ENCODE measurements at regions of chr18 and their contacts with region 1.

Region 1: DNA sequence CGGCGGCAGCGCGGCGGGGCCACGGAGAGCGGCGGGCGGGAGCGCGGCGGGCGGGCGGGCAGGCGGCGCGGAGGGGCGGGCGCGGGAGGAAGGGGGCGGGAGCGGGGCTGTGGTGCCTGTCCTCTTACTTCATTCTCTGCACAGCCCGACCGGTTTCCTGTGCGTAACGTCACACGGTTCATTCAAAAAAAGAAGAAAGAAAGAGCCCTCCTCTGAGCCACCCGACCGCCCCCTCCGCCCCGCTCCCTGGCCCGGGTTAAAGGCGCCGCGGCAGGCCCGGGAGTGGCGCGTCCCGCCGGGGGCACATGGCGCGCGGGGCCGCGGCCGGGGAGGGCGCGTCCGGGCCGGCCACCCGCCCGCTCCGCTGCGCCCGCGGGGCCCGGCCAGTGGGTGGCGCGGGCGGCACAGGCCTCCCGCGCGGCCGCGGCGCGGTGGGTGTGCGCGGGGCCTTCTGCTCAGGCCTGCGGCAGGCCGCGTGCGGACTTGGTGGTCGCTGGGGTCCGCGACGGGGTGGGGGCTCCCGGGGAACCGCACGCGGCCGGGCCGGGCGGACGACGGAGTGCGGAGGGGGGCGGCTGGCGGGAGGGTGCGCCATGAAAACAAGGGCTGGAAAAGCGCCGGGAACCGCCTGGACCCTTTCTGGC is 599 bp upstream of the BCL2 start:
- DNase-seq: peak; percentile 92

Region 2: GRCh38 chr18:63016270-63016669 is 303.9 kb before region 1 on chr18:
- intact Hi-C with region 1: loop called (anchors 1 kb)
- DNase-seq: no peak

Region 3: DNA sequence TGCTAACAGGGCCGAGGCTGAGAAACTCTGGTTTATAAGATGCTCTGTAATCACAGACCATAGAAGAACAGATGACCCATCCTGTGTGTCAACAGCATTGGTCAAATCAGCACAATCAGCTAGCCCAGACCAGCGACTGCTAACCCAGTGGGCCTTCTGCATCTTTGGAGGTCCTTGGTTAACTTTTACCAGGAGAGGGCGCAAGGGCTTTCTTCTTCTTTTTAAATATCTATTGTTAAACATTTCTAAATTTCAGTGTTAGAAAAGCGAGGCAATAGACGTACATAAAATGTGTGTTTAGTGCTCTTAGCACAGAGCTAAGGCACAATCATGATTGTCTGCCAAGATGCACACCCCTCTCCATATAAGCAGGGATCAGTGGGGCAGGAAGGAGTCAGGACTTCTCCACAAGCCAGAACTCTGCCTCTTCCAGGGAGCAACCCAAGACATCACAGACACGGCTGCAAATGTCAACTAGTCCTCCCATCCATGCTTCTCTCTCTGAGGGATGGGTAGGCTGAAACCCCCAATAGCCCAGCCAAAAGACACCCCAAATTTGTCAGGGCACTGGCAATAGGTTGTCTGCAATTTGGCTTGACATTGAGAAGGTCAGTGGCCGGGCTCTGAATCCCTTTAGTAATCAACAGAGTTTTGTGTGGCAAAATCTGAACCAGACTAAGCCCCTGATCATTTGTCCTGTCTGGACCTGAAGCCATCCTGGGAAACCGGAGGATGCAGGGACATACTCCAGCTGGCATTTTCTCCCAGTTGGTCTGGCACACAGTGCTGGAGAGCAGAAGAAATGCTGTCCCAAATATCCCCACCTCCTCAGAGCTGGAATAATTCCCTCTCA is 188.8 kb before region 1 on chr18:
- intact Hi-C with region 1: loop called (anchors 2 kb)
- DNase-seq: no peak

Region 4: GRCh38 chr18:63180971-63181376 is 139.2 kb before region 1 on chr18:
- intact Hi-C with region 1: loop called (anchors 5 kb)
- DNase-seq: no peak

Region 5: DNA sequence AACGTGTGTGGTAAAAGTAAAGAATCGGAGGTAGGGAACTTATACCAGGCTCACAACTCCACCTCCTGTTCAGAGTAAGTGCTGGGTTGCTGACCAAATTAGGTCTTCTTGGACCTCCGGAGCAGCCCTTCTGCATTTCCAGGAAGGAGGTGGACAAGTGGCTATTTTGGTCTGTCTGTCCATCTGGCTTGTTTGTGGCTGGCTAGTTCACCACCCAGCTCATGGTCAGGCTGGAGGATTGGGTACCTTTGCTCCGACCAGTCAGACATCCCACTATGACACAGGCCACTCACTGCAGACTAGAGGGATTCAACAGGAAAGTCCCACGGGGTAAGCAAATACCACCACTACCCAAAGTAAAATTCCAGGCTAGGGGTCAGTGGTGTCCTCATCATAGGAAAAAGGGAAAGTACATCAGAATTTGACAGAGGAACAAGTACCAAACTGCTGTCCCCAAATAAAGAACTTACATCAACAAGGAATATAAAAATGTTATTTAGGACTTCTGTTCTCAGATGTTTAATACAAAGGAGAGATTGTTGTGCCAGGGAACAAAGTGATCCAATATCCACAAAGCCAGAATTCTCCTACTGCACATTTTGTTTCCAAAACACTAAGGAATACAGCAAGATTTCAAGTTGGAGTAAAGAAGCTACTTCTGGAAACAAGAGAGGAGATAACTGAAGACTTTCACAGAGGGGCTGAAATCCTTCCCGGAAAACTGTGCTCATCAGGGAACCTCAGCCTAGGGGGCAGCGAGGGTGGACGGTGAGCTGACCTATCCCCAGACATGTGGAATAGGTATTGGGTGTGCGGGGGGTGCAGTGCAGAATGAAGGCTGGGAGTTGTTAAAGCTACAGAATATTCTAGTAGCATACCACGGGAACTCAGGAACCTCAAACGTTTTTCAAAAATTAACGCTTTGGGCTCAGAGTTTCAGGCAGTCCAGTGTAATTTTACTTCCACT is 57.5 kb before region 1 on chr18:
- intact Hi-C with region 1: loop called (anchors 2 kb)
- DNase-seq: no peak

Measured in cardiac septum (tissue), 1 donor.